Calu3 (cell line): ENCODE measurements at regions of chr3 and their contacts with region 1.

Region 1: GRCh38 chr3:67384760-67385397 is 269.5 kb downstream of the SUCLG2 start:
- DNase-seq: peak; percentile 18
- H3K4me3 Mint-ChIP-seq: no peak overlapping the region
- H3K27ac Mint-ChIP-seq: no peak overlapping the region
- H3K4me1 Mint-ChIP-seq: no peaks in the 10 kb centered on the region
- H3K27me3 Mint-ChIP-seq: no peaks in the 10 kb centered on the region
- CTCF ChIP-seq: no peak

Region 2: DNA sequence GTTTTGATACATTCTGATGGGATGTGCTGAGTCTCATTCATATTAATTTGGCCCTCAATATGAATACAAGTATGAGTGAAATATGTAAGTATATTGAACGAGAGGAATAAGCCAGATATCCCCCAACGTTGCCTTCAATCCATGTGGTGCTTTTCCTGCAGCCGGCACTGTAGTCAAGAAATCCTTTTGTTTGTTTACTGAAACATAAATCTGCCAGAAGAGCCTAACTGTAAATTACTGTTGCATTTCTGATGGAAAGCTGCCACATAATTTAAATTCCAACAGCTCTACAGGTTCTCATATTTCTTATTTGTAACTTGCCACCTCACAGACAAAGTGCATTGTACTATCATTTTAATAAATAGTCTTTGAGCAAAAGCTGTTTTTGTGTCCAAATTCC is 72.7 kb before region 1 on chr3:
- CTCF ChIA-PET with region 1: no interaction called
- intact Hi-C with region 1: no loop called
- DNase-seq: no peak
- H3K4me3 Mint-ChIP-seq: no peak overlapping the region
- H3K27ac Mint-ChIP-seq: no peak overlapping the region
- H3K4me1 Mint-ChIP-seq: no peaks in the 10 kb centered on the region
- H3K27me3 Mint-ChIP-seq: no peaks in the 10 kb centered on the region
- CTCF ChIP-seq: no peak

Region 3: GRCh38 chr3:67685499-67685898 is 300.6 kb after region 1 on chr3:
- CTCF ChIA-PET with region 1: no interaction called
- intact Hi-C with region 1: no loop called
- DNase-seq: no peak
- H3K4me3 Mint-ChIP-seq: no peak overlapping the region
- H3K27ac Mint-ChIP-seq: no peak overlapping the region
- H3K4me1 Mint-ChIP-seq: no peaks in the 10 kb centered on the region
- H3K27me3 Mint-ChIP-seq: no peaks in the 10 kb centered on the region
- CTCF ChIP-seq: no peak

Region 4: GRCh38 chr3:67790043-67790442 is 405.2 kb after region 1 on chr3:
- CTCF ChIA-PET with region 1: no interaction called
- intact Hi-C with region 1: loop called (anchors 1 kb)
- DNase-seq: peak; percentile 55
- H3K4me3 Mint-ChIP-seq: no peak overlapping the region
- H3K27ac Mint-ChIP-seq: no peak overlapping the region
- H3K4me1 Mint-ChIP-seq: no peaks in the 10 kb centered on the region
- H3K27me3 Mint-ChIP-seq: no peaks in the 10 kb centered on the region
- CTCF ChIP-seq: peak; percentile 17

Region 5: GRCh38 chr3:68017067-68017466 is 632.2 kb after region 1 on chr3:
- CTCF ChIA-PET with region 1: no interaction called
- intact Hi-C with region 1: loop called (anchors 10 kb)
- DNase-seq: no peak
- H3K4me3 Mint-ChIP-seq: no peak overlapping the region
- H3K27ac Mint-ChIP-seq: no peak overlapping the region
- H3K4me1 Mint-ChIP-seq: no peaks in the 10 kb centered on the region
- H3K27me3 Mint-ChIP-seq: no peaks in the 10 kb centered on the region
- CTCF ChIP-seq: no peak